Activated CD8-positive, alpha-beta T cell treated with anti-CD3 and anti-CD28 coated beads, Interleukin-2, amount 10 ng/mL, durations not matched to agents 7 days and 5 days (primary cell): ENCODE measurements at regions of chr6 and their contacts with region 1.

Region 1: GRCh38 chr6:35311390-35312075 is 13.9 kb downstream of the DEF6 start:
- DNase-seq: peak; percentile 78
- ATAC-seq: peak; percentile 88
- H3K4me3 Mint-ChIP-seq: peak overlapping the region; percentile 65
- H3K27ac Mint-ChIP-seq: peak overlapping the region; percentile 96
- H3K4me1 Mint-ChIP-seq: peaks cover 86% of the 10 kb centered on the region
- H3K27me3 Mint-ChIP-seq: no peaks in the 10 kb centered on the region

Region 2: DNA sequence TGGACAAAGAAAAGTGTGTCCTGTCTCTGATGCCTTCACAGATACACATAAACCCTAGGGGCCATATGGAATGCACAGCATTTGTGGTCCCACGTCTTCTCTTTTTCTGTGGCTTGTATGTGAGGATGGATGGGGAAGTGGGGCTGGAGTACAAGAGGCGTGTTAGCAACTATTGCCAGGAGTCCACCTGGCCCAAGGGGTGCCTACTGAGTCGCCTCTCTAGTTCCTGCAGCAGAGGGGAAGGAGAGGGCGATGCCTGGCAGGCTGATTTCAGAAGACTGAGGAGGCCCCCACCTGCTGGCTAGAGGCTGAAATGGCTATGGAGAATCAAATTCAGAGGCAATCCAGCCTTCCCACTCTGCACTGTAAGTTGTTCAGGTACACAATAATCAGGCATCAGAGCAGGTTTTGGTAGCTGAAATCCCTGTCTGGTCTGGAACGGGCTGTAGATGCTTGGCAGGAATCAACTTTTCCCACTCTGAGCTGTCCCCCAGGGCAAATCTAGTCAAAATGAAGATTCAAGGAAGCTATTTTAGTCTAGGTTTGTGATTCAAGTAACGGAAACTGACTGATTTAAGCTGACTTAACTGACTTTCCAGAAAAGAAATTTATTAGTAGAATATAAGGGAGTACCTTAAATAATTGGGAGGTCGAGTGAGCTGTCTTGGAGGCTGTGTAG is 16.0 kb after region 1 on chr6:
- CTCF ChIA-PET with region 1: interaction called, 446 read pairs
- POLR2A ChIA-PET with region 1: interaction called, 11 read pairs
- DNase-seq: peak; percentile 84
- ATAC-seq: peak; percentile 95
- H3K4me3 Mint-ChIP-seq: no peak overlapping the region
- H3K27ac Mint-ChIP-seq: peak overlapping the region; percentile 77
- H3K4me1 Mint-ChIP-seq: peaks cover 23% of the 10 kb centered on the region
- H3K27me3 Mint-ChIP-seq: no peaks in the 10 kb centered on the region